Esophagus squamous epithelium (tissue), 5 donors: ENCODE measurements at regions of chr2 and their contacts with region 1.

Region 1: GRCh38 chr2:20962939-20963557 is 80.8 kb downstream of the APOB start:
- DNase-seq: no peak
- H3K4me3 ChIP-seq: no peak overlapping the region
- H3K27ac ChIP-seq: no peak overlapping the region
- H3K4me1 ChIP-seq: no peaks in the 10 kb centered on the region
- H3K27me3 ChIP-seq: peaks cover 0 to 49% (median 0%) of the 10 kb centered on the region in 4 donors
- CTCF ChIP-seq: peak; percentile 76 to 92 (median 82)
- POLR2A ChIP-seq: no peak

Region 2: DNA sequence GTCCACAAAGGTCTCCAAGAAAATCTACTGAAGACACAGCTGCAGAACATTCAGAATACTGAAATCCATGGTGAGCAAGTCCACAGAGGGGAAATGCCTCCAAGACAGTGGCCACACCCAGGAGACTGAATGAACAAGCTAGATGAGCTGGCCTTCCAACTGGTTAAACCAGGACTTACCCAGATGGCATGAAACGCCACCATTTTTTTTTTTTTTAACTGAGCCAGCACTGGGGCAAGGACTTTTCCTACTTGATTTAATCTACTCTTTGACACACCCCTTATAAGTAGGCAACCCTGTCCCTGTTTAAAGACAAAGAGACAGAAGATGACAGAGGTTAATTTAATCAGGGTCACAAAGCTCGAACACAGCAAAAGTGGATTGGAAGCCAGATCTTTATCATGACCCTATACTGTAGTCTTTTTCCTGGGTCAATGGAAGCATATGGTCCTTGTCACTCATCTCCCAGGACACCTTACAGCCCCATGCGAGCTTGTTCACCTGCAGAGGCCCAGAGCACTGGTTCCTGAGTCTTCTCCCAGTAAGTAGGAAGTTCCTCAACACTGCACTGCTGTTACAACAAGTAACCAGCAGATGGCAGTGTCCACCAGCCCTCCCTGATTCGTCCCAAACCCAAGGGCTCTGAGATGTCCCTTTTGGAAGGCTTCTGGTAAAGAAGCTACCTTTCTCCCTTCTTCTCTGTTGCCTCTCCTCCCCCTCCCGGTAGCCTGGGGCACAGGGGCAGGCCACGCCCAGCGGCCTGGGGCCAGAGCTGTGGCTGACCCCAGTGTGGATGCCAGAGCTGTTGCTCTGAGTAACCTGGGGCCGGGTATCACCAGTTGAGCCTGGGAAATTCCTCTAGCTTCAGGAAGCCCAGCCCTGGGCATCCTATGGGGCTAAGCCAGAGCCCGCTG is 301.7 kb before region 1 on chr2:
- intact Hi-C with region 1: loop called (anchors 5 kb)
- DNase-seq: no peak
- H3K4me3 ChIP-seq: no peak overlapping the region
- H3K27ac ChIP-seq: peak overlapping the region; percentile 13 to 83 (median 72)
- H3K4me1 ChIP-seq: peaks cover 17 to 62% (median 18%) of the 10 kb centered on the region in 3 donors
- H3K27me3 ChIP-seq: peaks cover 2 to 61% (median 13%) of the 10 kb centered on the region in 4 donors
- CTCF ChIP-seq: peak; percentile 92 to 99 (median 94)
- POLR2A ChIP-seq: no peak

Region 3: DNA sequence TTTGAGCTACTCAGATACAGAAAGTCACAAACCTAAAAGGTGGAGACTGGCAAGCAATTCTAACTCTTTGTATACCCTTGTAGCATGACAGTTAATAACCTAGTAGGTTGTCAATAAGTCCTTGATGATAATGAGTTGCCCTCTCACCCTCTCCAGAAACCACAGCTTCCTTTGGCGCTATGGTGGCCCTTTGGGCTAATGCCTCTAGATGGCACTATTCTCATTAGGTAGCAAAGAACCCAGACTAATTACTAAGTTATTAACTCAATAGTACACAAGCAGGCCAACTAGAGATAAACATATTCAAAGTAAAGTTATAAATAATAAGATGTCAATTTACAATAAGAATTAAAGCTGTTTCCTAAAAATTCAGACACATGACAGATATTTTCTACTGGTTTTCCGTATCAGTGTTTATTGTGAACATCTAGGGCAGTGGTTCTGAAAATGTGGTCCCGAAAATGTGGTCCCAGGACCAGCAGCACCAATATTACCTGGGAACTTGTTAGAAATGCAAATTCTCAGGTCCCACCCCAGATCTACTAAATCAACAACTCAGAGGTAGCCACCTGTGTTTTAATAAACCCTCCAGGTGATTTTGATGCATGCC is 181.3 kb before region 1 on chr2:
- intact Hi-C with region 1: loop called (anchors 2 kb)
- DNase-seq: no peak
- H3K4me3 ChIP-seq: no peak overlapping the region
- H3K27ac ChIP-seq: no peak overlapping the region
- H3K4me1 ChIP-seq: peaks cover 0 to 21% (median 0%) of the 10 kb centered on the region in 3 donors
- H3K27me3 ChIP-seq: no peaks in the 10 kb centered on the region
- CTCF ChIP-seq: peak in 5 of 6 experiments; percentile 44 to 77 (median 53)
- POLR2A ChIP-seq: no peak

Region 4: DNA sequence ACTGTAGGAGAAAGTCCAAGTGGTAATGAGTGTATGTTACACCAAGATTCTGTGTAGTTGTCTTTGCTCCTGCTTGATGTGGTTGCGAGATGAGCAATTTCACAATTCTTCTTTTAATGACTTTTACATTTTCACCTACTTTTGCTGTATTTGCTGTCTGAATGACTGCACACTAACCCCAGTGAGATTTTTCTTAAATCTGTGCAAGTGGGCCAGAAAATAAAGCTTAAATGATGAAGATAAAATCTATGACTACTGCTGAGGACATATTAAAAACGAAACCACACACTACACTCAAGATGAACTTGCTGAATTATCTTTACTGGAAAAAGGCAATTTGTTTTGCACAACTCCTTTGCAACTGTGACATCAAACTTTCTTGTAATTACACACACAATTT is 144.2 kb before region 1 on chr2:
- intact Hi-C with region 1: no loop called
- DNase-seq: no peak
- H3K4me3 ChIP-seq: no peak overlapping the region
- H3K27ac ChIP-seq: no peak overlapping the region
- H3K4me1 ChIP-seq: peaks cover 0 to 14% (median 0%) of the 10 kb centered on the region in 3 donors
- H3K27me3 ChIP-seq: no peaks in the 10 kb centered on the region
- CTCF ChIP-seq: no peak
- POLR2A ChIP-seq: no peak

Region 5: DNA sequence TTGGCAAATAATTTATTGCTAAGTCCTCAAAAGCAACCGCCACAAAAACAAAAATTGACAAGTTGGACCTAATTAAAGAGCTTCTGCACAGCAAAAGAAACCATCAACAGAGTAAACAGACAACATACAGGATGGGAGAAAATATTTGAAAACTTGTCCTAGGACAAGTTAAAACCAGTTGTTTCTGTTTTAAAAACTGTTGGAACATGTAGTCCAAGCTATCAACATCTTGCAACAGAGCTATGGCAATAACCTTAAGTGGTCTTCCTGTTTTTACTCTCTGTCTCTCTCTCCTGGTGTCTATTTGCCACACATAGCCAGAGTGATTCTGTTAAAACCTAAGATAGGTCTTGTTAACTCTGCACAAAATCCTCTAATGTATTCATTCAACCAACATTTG is 74.8 kb before region 1 on chr2:
- intact Hi-C with region 1: no loop called
- DNase-seq: no peak
- H3K4me3 ChIP-seq: no peak overlapping the region
- H3K27ac ChIP-seq: no peak overlapping the region
- H3K4me1 ChIP-seq: no peaks in the 10 kb centered on the region
- H3K27me3 ChIP-seq: no peaks in the 10 kb centered on the region
- CTCF ChIP-seq: no peak
- POLR2A ChIP-seq: no peak